T-cell (primary cell): ENCODE measurements at regions of chr12 and their contacts with region 1.

Region 1: DNA sequence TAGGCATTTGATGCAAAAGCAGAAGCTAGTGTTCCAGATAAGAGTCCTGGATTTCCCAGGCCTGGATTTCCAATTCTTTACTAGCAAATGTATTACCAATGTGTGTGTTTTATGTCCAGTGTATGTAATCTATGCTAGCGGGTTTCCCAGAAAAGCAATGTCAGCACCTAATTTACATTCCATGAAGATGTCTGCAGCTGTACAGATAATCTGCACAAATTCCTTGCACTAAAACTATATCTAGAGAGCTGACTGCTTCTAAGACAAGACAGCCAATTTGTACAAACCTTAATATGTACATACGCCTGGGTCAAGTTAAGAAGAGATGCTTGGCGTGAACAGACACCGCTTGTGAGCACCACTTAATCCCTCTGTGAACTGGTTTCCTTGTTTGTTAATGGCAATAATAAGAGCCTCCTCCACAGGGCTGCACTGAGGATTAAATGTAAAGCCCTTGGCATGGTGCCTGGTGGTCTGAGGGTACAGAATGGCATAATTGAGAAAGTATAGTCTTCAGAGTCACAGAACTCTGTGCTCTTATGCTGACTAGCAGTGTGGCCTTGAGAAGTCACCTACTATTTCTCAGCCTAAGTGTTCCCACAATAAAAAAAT is 185.6 kb downstream of the EPS8 start:
- DNase-seq: no peak
- ATAC-seq: no peak
- H3K4me3 ChIP-seq: no peak overlapping the region
- H3K4me3 Mint-ChIP-seq: no peak overlapping the region
- H3K27ac ChIP-seq: no peak overlapping the region
- H3K27ac Mint-ChIP-seq: no peak overlapping the region
- H3K4me1 ChIP-seq: no peaks in the 10 kb centered on the region
- H3K4me1 Mint-ChIP-seq: no peaks in the 10 kb centered on the region
- H3K27me3 ChIP-seq: peaks cover 0 to 3% of the 10 kb centered on the region in 2 experiments
- H3K27me3 Mint-ChIP-seq: peaks cover 5 to 7% of the 10 kb centered on the region in 2 donors

Region 2: GRCh38 chr12:14741153-14741552 is 862.4 kb before region 1 on chr12:
- CTCF ChIA-PET with region 1: no interaction called
- POLR2A ChIA-PET with region 1: interaction called in 1 of 2 experiments, 11 read pairs
- DNase-seq: no peak
- ATAC-seq: no peak
- H3K4me3 ChIP-seq: no peak overlapping the region
- H3K4me3 Mint-ChIP-seq: no peak overlapping the region
- H3K27ac ChIP-seq: no peak overlapping the region
- H3K27ac Mint-ChIP-seq: no peak overlapping the region
- H3K4me1 ChIP-seq: no peaks in the 10 kb centered on the region
- H3K4me1 Mint-ChIP-seq: peaks cover 0 to 3% (median 0%) of the 10 kb centered on the region in 3 donors
- H3K27me3 ChIP-seq: no peaks in the 10 kb centered on the region
- H3K27me3 Mint-ChIP-seq: no peaks in the 10 kb centered on the region